Caco-2 (cell line): ENCODE measurements at regions of chr4 and their contacts with region 1.

Region 1: GRCh38 chr4:166481739-166482138 is 608.7 kb downstream of the TLL1 start:
- DNase-seq: no peak
- H3K4me3 ChIP-seq: no peak overlapping the region
- H3K4me3 Mint-ChIP-seq: no peak overlapping the region
- H3K27ac Mint-ChIP-seq: no peak overlapping the region
- H3K4me1 ChIP-seq: peaks cover 20% of the 10 kb centered on the region
- H3K4me1 Mint-ChIP-seq: peaks cover 27% of the 10 kb centered on the region
- H3K27me3 ChIP-seq: no peaks in the 10 kb centered on the region
- H3K27me3 Mint-ChIP-seq: no peaks in the 10 kb centered on the region
- CTCF ChIP-seq: no peak

Region 2: DNA sequence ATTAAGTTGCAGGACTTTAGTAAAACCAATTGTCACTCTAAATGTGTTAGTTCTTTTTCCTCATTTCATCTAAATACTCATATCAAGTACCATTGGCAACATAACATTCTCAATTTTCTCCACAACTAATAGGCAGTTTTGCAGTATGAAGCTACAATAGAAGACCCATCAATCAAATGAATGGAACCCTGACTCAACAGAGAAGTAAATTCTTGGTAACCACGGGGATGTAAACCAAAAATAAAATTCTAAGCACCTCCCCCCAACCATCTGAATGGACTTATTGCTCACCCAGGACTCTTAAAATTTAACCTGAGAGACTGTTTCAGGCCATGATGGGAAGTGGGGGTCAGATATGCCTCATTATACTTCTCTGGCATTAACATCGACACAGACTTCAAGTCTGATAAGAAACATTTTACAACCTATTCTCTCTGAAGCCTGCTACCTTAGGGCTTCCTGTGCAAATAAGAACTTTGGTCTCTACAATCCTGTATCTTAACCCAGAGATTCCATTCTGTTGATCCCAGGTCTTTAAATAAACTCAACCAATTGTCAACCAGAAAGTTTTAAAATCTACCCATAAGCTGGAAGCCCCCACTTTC is 12.2 kb after region 1 on chr4:
- CTCF ChIA-PET with region 1: interaction called, 4 read pairs
- POLR2A ChIA-PET with region 1: no interaction called
- intact Hi-C with region 1: loop called (anchors 1 kb)
- DNase-seq: peak; percentile 67 to 70
- H3K4me3 ChIP-seq: no peak overlapping the region
- H3K4me3 Mint-ChIP-seq: peak overlapping the region; percentile 52
- H3K27ac Mint-ChIP-seq: peak overlapping the region; percentile 40
- H3K4me1 ChIP-seq: peaks cover 33% of the 10 kb centered on the region
- H3K4me1 Mint-ChIP-seq: peaks cover 33% of the 10 kb centered on the region
- H3K27me3 ChIP-seq: no peaks in the 10 kb centered on the region
- H3K27me3 Mint-ChIP-seq: no peaks in the 10 kb centered on the region
- CTCF ChIP-seq: no peak

Region 3: DNA sequence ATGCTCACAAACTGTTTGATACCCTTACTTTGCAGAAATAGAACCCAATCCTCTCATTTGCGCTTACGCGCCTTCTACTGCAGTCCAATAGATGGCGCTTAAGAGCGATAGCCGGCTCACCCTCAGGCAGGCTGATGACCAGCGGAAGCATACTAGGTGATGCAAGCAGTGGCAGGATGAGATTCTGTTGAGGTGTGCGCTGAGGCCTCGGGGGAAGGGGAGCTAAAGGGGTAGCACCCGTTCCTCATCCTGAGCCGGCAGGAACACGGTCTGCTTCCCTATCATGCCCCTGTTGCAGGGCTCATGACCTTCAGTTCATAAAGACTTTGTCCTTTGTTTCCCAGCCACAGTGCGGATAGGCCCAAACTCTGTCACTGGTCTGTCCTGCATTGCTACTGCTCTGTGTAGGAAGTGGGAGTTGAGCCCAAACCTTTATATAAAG is 20.2 kb after region 1 on chr4:
- CTCF ChIA-PET with region 1: interaction called, 4 read pairs
- POLR2A ChIA-PET with region 1: no interaction called
- intact Hi-C with region 1: loop called (anchors 1 kb)
- DNase-seq: peak in 1 of 2 experiments; percentile 28
- H3K4me3 ChIP-seq: no peak overlapping the region
- H3K4me3 Mint-ChIP-seq: no peak overlapping the region
- H3K27ac Mint-ChIP-seq: no peak overlapping the region
- H3K4me1 ChIP-seq: 0 out of 2 replicates have a peak, but pooled peaks cover 4% of the 10 kb centered on the region
- H3K4me1 Mint-ChIP-seq: peaks cover 13% of the 10 kb centered on the region
- H3K27me3 ChIP-seq: no peaks in the 10 kb centered on the region
- H3K27me3 Mint-ChIP-seq: no peaks in the 10 kb centered on the region
- CTCF ChIP-seq: peak in 1 of 2 experiments; percentile 6

Region 4: DNA sequence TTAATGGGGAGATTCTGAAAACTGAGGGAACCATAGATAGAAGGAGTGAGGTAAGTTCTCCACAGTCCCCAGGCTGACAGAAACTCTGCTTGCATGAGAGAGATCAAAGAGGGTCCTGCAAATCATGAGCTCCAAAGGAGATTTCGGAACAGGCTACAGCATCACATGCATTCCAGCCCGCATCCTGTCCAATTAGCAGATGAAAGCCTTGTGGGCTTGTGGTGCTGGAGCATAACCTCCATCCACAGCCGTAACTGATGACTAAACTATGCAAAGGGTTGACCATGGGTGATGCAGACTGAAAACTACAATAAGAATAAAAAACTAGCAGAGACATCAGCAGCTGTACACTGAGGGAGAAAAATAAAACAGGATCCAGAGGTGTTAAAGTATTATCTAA is 45.8 kb after region 1 on chr4:
- CTCF ChIA-PET with region 1: no interaction called
- POLR2A ChIA-PET with region 1: no interaction called
- intact Hi-C with region 1: no loop called
- DNase-seq: no peak
- H3K4me3 ChIP-seq: no peak overlapping the region
- H3K4me3 Mint-ChIP-seq: no peak overlapping the region
- H3K27ac Mint-ChIP-seq: no peak overlapping the region
- H3K4me1 ChIP-seq: no peaks in the 10 kb centered on the region
- H3K4me1 Mint-ChIP-seq: no peaks in the 10 kb centered on the region
- H3K27me3 ChIP-seq: no peaks in the 10 kb centered on the region
- H3K27me3 Mint-ChIP-seq: no peaks in the 10 kb centered on the region
- CTCF ChIP-seq: no peak

Region 5: DNA sequence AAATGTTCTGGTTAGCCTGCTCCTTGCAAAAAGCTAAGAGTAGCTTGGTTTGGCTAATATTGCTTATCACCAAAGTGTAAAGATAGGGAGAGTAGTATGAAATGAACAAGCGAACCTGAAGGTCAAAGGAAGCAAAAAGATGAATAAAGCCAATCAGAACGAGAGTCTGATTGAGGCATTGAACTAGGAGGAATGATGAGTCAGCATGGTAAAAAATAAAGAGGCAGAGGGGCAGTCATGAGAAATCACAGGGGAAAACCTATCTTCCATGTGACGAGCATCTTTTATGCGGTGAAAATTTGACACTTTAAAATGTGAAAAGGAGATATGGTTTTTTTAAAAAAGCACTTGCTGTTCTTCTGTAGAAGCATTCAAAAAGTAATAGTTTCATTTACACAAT is 218.9 kb after region 1 on chr4:
- CTCF ChIA-PET with region 1: no interaction called
- POLR2A ChIA-PET with region 1: no interaction called
- intact Hi-C with region 1: no loop called
- DNase-seq: no peak
- H3K4me3 ChIP-seq: no peak overlapping the region
- H3K4me3 Mint-ChIP-seq: no peak overlapping the region
- H3K27ac Mint-ChIP-seq: no peak overlapping the region
- H3K4me1 ChIP-seq: no peaks in the 10 kb centered on the region
- H3K4me1 Mint-ChIP-seq: no peaks in the 10 kb centered on the region
- H3K27me3 ChIP-seq: no peaks in the 10 kb centered on the region
- H3K27me3 Mint-ChIP-seq: no peaks in the 10 kb centered on the region
- CTCF ChIP-seq: no peak